HEK293 (cell line): ENCODE measurements at regions of chr20 and their contacts with region 1.

Region 1: DNA sequence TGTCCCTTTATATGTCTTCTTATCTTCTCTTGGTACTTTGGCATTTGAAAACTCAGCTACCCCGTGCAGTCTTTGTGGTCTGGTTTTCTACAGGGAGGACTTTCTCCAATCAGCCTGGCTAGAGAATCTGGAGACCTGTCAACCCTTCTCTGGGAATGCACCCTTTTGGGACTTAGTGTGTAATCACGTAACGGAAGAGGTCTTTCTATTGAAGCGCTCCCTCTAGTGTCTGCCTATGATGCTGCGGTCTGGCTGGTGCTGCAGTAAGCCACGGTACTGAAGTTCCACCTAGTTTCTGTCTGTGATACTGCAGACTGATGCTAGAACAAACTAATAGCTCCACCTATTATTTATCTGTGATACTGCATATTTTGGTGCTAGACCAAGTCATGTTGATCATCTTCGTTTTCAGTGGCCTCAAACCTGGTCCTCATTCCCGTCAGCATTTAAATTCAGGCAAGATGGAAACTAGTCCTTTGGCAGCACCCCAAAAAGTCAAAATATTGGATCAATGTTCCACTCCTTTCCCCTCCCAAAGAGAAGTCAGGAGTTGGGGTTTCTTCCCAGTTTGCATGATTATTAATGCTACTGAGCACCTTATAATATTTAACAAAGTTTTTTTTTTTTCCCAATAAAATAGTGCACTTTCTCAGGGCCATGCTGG is 12.5 kb upstream of the SIRPB2 start:
- H3K4me3 ChIP-seq: no peak overlapping the region
- H3K27ac ChIP-seq: no peak overlapping the region
- H3K4me1 ChIP-seq: no peaks in the 10 kb centered on the region
- CTCF ChIP-seq: peak; percentile 92

Region 2: GRCh38 chr20:1313236-1313964 is 190.3 kb before region 1 on chr20:
- CTCF ChIA-PET with region 1: interaction called, 30 read pairs
- POLR2A ChIA-PET with region 1: no interaction called
- H3K4me3 ChIP-seq: peak overlapping the region; percentile 16; the same call in 1 of the 2 replicates
- H3K27ac ChIP-seq: no peak overlapping the region; the same call in 1 of the 2 replicates
- H3K4me1 ChIP-seq: 0 out of 2 replicates have a peak, but pooled peaks cover 2% of the 10 kb centered on the region
- CTCF ChIP-seq: peak; percentile 50

Region 3: DNA sequence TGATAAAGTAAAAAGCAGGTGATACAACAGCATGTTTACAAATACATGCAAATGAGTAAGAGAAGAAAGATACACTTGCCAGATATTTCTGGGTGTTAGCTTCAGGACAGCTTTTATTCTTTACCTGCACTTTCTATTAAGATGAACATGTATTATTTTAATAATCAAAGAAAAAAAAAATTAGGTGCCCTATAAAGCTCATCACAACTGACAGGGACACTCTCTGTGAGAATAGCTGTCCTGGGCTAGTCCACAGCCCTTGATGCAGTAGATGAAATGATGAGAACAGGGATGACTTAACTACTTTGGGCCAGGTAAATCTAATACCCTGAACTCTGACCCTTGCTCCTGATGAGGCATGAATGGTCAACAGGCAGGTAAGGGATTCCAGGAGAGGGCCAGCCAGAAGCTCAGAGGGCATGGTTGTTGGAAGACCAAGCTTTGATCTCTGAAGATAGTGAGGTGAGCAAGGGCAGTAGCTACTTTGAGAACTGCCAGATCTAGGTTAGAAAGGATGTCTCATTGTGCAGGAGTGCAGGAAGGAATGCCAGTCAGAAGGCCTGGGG is 52.7 kb before region 1 on chr20:
- CTCF ChIA-PET with region 1: interaction called, 18 read pairs
- POLR2A ChIA-PET with region 1: no interaction called
- H3K4me3 ChIP-seq: no peak overlapping the region
- H3K27ac ChIP-seq: no peak overlapping the region
- H3K4me1 ChIP-seq: no peaks in the 10 kb centered on the region
- CTCF ChIP-seq: no peak

Region 4: DNA sequence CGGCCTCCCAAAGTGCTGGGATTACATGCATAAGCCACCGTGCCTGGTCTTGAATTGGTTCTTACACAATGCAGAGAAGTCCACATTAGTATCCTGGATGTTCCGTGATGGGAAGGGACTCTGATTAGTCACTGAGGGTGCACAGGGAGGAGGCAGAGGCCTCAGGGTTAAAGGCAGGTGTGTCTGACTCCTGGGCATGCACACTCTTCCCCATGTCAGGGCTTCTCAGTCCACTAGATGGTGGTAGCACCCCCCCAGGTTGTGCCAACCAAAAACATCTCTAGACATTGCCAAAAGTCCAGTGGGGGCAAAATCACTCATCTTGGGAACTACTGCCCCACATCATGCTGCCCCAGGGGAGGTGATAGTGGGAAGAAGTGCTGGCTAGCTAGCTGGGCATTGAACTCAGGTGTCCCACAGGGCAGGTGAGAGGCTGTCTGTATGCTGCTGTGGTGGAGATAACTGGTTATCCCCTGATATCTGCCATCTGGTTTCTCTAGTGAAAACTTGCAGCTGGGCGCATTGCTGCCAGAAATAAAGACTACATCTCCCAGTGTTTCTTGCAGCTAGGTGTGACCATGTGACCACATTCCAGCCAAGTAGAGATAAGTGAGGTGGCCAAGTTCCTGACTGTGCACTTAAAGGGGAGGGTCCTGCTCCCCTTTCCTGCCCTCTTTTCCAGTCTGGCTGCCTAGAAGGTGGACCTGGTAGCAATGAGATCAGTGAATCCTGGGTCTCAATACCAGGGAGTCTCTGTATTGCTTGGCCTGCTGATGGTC is 28.7 kb before region 1 on chr20:
- CTCF ChIA-PET with region 1: interaction called, 60 read pairs
- POLR2A ChIA-PET with region 1: no interaction called
- H3K4me3 ChIP-seq: no peak overlapping the region
- H3K27ac ChIP-seq: no peak overlapping the region
- H3K4me1 ChIP-seq: no peaks in the 10 kb centered on the region
- CTCF ChIP-seq: 0 out of 2 replicates have a peak, but pooled peaks have one; percentile 20

Region 5: GRCh38 chr20:1491281-1491840 is 12.3 kb before region 1 on chr20 and contains the start of gene SIRPB2:
- CTCF ChIA-PET with region 1: interaction called, 26 read pairs
- POLR2A ChIA-PET with region 1: no interaction called
- H3K4me3 ChIP-seq: no peak within 1 kb of the TSS
- H3K27ac ChIP-seq: no peak within 1 kb of the TSS
- H3K4me1 ChIP-seq: peaks cover 3% of the 10 kb centered on the region; the same call in 1 of the 2 replicates
- CTCF ChIP-seq: no peak

Region 6: DNA sequence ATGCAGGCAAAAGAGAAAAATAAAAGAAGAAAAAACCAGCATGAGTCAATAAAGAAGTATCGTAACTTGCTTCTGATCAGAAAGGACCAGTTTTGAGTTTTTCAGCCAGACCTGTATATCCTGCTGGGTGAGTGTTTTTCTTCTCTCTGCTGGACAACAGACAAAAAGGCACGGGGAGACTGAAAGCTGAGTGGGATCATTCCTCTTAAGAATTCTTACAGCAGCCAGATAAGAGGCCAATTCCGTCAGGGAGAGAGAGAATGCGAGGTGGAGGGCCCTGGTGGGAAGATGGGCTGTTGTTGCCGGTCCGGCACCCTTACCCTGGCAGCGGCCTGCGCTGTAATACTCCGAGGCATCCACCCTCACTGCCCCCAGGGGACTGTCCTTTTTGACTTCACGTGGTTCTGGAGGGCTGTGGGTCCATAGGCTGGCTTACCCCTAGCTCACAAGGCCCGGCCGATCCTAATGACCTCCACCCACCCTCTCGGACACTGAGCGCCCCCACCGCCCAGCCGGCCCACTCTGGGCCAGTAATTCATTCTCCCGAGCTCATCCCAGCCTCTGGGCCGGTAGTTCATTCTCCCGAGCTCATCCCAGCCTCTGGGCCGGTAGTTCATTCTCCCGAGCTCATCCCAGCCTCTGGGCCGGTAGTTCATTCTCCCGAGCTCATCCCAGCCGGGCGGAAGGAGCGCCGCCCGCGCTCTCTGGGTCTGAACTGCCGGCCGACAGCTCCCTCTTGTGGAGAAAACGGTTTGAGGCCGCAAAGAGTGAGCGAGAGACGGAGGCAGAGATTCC is 273.2 kb after region 1 on chr20:
- CTCF ChIA-PET with region 1: interaction called, 13 read pairs
- POLR2A ChIA-PET with region 1: interaction called, 3 read pairs
- H3K4me3 ChIP-seq: peak overlapping the region; percentile 63
- H3K27ac ChIP-seq: peak overlapping the region; percentile 57; the same call in 1 of the 2 replicates
- H3K4me1 ChIP-seq: peaks cover 4% of the 10 kb centered on the region
- CTCF ChIP-seq: peak; percentile 70